ENCODE measurements at regions of chr12 and their contacts with region 1.

Region 1: GRCh38 chr12:8890313-8891085 is 23.8 kb upstream of the PHC1 start:
- DNase-seq: peak; percentile 74
- H3K4me3 ChIP-seq: peak overlapping the region; percentile 21 to 58
- H3K27ac ChIP-seq: peak overlapping the region; percentile 22 to 69
- H3K4me1 ChIP-seq: peaks cover 8% of the 10 kb centered on the region
- H3K27me3 ChIP-seq: no peaks in the 10 kb centered on the region
- CTCF ChIP-seq: peak; percentile 85 to 94 (median 90)
- POLR2A ChIP-seq: no peak

Region 2: DNA sequence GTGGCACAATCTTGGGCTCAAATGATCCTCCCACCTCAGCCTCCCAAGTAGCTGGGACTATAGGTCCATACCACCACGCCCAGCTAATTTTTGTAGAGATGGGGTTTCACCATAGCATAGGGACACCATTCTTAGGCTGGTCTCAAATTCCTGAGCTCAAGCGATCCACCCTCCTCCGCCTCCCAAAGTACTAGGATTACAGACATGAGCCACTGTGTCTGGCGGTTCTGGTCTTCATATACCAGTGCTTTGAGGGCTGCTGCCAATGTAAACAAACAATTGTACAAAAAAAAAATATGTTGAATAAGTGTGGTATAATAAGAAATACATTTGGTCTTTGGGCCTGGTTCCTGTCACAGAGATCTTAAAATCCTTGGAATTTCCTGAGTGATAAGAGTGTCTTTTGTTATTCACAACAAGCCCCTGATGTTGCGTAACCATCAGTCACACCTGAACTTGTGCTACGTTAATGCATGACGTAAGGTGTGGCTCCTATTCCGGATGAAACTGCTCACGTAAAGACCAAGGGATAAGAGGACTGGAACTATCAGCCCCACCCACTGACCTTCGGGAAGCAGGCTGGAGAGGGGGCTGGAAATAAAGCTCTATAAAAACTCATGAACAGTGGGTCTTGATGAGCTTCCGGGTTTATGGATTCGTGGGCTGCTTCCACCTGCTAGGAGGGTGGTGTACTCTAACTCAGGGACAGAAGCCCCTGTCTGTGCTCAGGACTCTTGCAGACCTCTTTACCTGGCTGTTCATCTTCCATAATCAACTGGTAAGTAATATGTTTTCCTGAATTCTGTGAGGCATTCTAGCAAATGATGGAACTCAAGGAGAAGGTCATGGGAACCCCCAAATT is 209.2 kb before region 1 on chr12:
- intact Hi-C with region 1: loop called (anchors 5 kb)
- DNase-seq: no peak
- H3K4me3 ChIP-seq: no peak overlapping the region
- H3K27ac ChIP-seq: peak overlapping the region; percentile 19 to 31
- H3K4me1 ChIP-seq: peaks cover 11% of the 10 kb centered on the region
- H3K27me3 ChIP-seq: no peaks in the 10 kb centered on the region
- CTCF ChIP-seq: no peak
- POLR2A ChIP-seq: no peak

Measured in testis (tissue), 5 donors.